A549 (cell line): ENCODE measurements at regions of chr6 and their contacts with region 1.

Region 1: DNA sequence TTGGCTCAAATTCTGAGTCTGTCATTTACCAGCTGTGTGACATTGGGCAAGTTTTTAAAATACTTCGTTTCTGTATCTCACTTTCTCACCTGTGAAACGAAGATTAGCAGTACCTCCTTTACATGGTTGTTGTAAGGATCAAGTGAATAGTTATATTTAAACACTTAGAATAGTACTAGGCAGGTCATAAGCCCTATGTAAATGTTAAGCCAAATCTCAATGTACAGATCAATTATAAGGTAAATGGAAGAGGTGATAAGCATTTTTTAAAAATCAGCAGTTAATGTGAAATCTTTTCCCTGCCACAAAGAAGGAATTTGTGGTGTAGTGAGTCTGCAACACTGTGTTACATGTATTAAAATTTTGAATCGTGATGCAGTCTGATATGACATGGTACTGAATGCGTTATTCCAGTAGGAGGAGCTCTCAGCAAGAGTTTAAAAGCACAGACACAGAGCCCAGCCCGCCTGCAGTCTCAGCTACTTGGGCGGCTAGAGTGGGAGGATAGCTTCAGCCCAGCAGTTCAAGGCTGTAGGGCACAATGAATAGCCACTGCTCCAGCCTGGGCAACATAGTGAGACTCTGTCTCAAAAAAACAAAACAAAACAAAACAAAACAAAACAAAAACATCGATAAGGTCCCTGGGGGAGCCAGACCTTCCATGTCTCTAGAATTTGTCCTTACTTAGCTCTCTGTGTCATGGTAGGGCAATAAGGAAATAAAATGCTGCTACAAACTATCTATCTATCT is 46.0 kb downstream of the GTF2H5 start:
- DNase-seq: peak; percentile 35 to 76
- ATAC-seq: peak; percentile 100
- H3K4me3 ChIP-seq: no peak overlapping the region
- H3K27ac ChIP-seq: no peak overlapping the region
- H3K4me1 ChIP-seq: peaks cover 12% of the 10 kb centered on the region; the same call in 2 of the 3 replicates
- CTCF ChIP-seq: peak; percentile 73
- EP300 ChIP-seq: no peak
- POLR2A ChIP-seq: no peak
- RAD21 ChIP-seq: peak; percentile 77 to 83

Region 2: DNA sequence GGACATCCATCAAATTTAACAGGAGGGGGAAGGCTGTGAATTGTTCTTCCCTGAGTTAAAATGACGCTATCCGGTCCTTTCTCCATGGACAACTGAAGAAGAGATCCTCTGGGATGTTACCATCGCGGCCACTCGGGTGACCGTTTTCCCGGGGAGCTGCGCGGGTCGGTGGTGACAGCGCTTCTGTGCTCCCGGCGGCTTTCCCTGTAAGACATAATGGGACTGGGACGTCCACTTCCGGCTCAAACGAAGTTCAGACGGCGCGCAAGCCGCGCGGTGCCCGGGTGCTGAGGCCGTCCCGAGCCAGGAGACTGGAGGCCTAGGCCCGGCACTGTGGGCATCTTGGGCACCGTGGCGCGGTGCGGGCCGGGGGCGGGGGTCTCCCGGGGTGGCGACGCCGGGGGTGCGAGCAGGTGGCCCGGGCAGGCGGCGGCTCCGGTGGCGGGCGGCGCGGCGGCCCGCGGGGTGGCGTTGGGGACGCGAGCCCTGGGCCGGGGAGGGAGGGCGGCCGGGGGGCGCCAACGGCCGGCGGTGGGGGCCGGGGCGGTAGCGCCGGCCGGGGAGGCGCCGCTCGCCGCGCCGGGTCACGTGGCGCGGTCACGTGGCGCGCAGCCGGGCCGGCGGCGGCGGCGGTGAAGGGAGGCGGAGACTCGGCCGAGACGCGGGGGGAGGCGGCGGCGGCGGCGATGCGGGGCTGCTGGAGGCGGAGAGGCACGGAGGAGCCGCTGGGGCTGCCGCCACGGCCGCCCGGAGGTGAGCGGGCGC is 17.6 kb after region 1 on chr6:
- CTCF ChIA-PET with region 1: interaction called, 13 read pairs
- POLR2A ChIA-PET with region 1: no interaction called
- DNase-seq: peak; percentile 51 to 75
- ATAC-seq: peak; percentile 88 to 90
- H3K4me3 ChIP-seq: peak overlapping the region; percentile 96
- H3K27ac ChIP-seq: peak overlapping the region; percentile 100
- H3K4me1 ChIP-seq: peaks cover 16% of the 10 kb centered on the region; the same call in 2 of the 3 replicates
- CTCF ChIP-seq: no peak
- EP300 ChIP-seq: no peak
- POLR2A ChIP-seq: peak; percentile 15
- RAD21 ChIP-seq: no peak

Region 3: GRCh38 chr6:158605266-158605878 is 391.3 kb after region 1 on chr6:
- CTCF ChIA-PET with region 1: interaction called, 32 read pairs
- POLR2A ChIA-PET with region 1: no interaction called
- DNase-seq: peak; percentile 59 to 73
- ATAC-seq: peak; percentile 81 to 92
- H3K4me3 ChIP-seq: no peak overlapping the region
- H3K27ac ChIP-seq: no peak overlapping the region
- H3K4me1 ChIP-seq: no peaks in the 10 kb centered on the region
- CTCF ChIP-seq: peak; percentile 59
- EP300 ChIP-seq: no peak
- POLR2A ChIP-seq: no peak
- RAD21 ChIP-seq: peak; percentile 55 to 58